ENCODE measurements at regions of chr19 and their contacts with region 1.

Region 1: DNA sequence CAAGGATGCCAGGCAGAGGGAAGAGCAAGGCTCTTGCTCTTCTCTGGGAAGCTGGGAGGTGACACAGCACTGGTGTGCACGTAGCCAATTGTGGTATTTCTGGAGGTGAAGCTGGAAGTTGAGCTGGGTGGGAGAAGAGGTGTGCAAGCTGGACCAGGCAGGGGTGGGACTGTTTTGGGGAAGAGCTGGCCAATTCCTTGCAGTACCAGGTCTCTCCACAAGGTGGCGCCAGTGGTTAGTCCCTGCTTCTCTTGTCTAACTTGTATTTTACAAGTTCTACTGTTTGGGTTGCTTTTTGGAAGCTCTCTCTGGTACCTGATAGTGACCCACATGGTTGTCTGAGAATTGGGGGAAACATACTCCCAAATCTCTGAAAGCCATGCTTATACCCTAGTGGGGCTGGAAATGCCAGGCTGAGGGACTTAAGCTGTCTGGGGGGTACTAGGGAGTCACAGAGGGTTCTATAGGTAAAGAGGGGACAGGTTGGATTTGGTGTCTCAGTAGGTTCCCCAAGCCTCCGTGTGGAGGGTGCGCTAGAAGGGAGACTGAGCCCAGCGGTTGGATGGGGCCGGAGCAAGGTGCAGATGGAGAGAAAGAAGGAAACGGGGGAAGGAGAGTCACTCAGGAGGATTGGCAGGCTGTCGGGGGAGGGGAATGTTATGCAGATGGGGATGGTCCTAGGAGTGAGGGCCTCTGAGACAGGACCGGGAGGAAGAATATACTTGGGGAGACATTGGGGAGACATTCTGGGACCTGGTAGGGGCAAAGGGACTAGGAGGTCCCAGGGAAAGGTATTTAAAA is 3.0 kb downstream of the HPN start:
- DNase-seq: peak; percentile 76 to 95
- ATAC-seq: peak; percentile 4 to 42; a peak in 4 of 6 replicates
- H3K4me3 ChIP-seq: no peak overlapping the region
- H3K27ac ChIP-seq: no peak overlapping the region
- H3K4me1 ChIP-seq: peaks cover 29% of the 10 kb centered on the region
- CTCF ChIP-seq: peak; percentile 99
- EP300 ChIP-seq: no peak
- POLR2A ChIP-seq: no peak
- RAD21 ChIP-seq: peak; percentile 76 to 82

Region 2: DNA sequence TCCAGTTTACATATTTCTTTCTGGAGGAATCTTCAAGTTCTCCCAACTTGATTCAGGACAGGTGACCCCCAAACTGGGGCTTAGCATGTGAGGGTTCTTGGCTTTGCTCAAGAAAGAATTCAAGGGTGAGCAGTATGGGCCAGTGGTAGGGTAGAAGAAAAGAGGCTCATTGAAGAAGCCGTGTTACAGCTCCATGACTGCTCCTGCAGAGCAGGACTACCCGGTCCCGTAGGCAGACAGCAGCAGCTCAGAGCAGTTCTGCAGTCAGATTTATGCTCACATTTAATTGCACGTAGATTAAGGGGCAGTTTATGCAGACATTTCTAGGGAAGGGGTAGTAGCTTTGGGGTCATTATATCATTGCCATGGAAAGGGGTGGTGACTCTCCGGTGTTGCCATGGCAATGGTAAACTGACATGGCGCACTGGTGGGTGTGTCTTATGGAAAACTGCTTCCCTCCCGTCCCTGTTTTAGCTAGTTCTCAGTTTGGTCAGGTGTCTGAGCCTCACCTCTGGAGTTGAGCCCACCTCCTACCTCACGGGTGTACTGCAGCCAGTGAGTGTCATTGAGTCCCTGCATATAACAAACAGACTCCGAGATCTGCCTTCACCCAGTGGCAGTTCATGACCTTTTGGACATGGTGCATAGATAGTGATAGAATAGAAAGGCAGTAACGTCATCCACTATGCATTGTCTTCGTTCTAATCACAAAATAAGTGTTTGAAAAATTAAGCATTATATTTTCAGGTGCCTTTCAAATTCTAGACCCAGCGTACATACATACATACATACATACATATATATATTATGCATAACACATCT is 64.5 kb before region 1 on chr19:
- CTCF ChIA-PET with region 1: interaction called, 253 read pairs
- POLR2A ChIA-PET with region 1: no interaction called
- DNase-seq: no peak
- ATAC-seq: peak; percentile 49 to 57; a peak in 4 of 6 replicates
- H3K4me3 ChIP-seq: no peak overlapping the region
- H3K27ac ChIP-seq: no peak overlapping the region
- H3K4me1 ChIP-seq: peaks cover 1% of the 10 kb centered on the region; the same call in 1 of the 3 replicates
- CTCF ChIP-seq: no peak
- EP300 ChIP-seq: no peak
- POLR2A ChIP-seq: no peak
- RAD21 ChIP-seq: no peak

Region 3: GRCh38 chr19:35006342-35007018 is 38.0 kb before region 1 on chr19:
- CTCF ChIA-PET with region 1: interaction called, 29 read pairs
- POLR2A ChIA-PET with region 1: interaction called, 3 read pairs
- DNase-seq: peak; percentile 98 to 100
- ATAC-seq: peak; percentile 84 to 92
- H3K4me3 ChIP-seq: peak overlapping the region; percentile 25
- H3K27ac ChIP-seq: peak overlapping the region; percentile 93 to 94
- H3K4me1 ChIP-seq: peaks cover 79% of the 10 kb centered on the region
- CTCF ChIP-seq: peak; percentile 24; the same call in 2 of the 3 replicates
- EP300 ChIP-seq: peak; percentile 97
- POLR2A ChIP-seq: no peak
- RAD21 ChIP-seq: peak; percentile 27 to 71

Region 4: DNA sequence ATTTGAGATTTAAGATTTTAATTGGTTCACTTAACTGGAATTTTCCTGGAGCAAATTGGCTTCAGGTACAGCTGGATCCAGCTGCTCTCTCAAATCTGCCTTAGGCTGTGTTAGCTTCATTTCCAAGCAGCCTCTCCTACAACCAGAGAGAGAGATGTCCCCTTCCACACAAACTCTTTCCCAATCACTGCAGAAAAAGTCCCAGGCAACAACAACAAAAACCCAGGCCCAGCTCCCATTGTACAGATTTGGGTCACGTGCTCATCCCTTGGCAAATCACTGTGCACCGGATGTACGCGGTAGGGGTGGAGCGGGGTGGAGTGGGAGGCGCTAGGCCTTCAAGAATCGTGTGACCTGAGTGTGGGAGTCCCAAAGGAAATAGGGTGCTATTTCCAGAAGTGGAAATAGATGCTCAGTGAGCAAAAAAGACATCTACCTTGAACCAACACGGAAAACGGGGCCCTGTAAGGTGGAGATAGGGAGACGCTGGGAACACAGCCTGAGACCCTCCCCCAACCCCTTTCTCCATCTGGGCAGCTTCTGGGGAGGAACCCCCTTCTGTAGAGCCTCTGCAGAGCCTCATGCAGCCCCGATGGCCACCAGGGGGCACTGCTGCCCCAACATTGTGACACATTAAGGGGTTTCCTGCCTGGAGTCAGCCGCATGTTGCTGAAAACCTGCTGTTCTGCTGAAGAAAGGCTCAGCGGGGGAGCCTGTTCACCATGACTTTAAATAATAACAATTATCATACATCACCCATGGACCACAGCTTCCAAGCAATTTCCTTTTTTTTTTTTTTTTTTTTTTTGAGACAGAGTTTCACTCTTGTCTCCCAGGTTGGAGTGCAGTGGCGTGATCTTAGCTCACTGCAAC is 22.4 kb after region 1 on chr19:
- CTCF ChIA-PET with region 1: interaction called, 374 read pairs
- POLR2A ChIA-PET with region 1: no interaction called
- DNase-seq: peak; percentile 90 to 93
- ATAC-seq: peak; percentile 83 to 95
- H3K4me3 ChIP-seq: no peak overlapping the region; the same call in 2 of the 3 replicates
- H3K27ac ChIP-seq: no peak overlapping the region
- H3K4me1 ChIP-seq: peaks cover 9% of the 10 kb centered on the region; the same call in 2 of the 3 replicates
- CTCF ChIP-seq: peak; percentile 93
- EP300 ChIP-seq: no peak
- POLR2A ChIP-seq: no peak
- RAD21 ChIP-seq: peak; percentile 90 to 94

Region 5: DNA sequence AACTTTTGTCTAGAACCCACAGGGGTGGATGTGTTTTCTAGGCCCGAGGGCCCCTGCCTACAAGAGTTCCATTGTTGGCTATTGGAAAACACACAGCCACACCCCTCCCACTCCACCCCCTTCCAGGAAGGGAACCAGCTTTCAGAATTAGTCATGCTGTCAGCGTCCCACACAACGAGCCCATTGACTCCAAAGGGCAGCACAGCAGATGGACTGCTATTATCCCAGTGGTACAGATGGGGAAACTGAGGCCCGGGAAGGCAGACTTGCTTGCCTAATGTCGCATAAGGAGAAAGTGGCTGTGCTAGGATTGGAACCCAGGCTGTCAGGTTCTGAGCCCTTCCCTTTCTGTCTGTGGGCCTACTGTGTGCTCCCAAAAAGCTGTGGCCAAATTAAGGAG is 63.0 kb after region 1 on chr19:
- CTCF ChIA-PET with region 1: interaction called, 29 read pairs
- POLR2A ChIA-PET with region 1: no interaction called
- DNase-seq: peak in 1 of 2 experiments; percentile 55
- ATAC-seq: no peak
- H3K4me3 ChIP-seq: no peak overlapping the region
- H3K27ac ChIP-seq: no peak overlapping the region
- H3K4me1 ChIP-seq: peaks cover 6% of the 10 kb centered on the region; the same call in 1 of the 3 replicates
- CTCF ChIP-seq: no peak
- EP300 ChIP-seq: no peak
- POLR2A ChIP-seq: no peak
- RAD21 ChIP-seq: no peak

Region 6: GRCh38 chr19:35140962-35141637 is 96.6 kb after region 1 on chr19:
- CTCF ChIA-PET with region 1: interaction called, 58 read pairs
- POLR2A ChIA-PET with region 1: no interaction called
- DNase-seq: peak; percentile 95 to 100
- ATAC-seq: peak; percentile 59 to 86
- H3K4me3 ChIP-seq: peak overlapping the region; percentile 34
- H3K27ac ChIP-seq: peak overlapping the region in 1 of 2 experiments; percentile 52; a peak in 2 of 6 replicates
- H3K4me1 ChIP-seq: peaks cover 52% of the 10 kb centered on the region
- CTCF ChIP-seq: peak; percentile 66
- EP300 ChIP-seq: no peak
- POLR2A ChIP-seq: no peak
- RAD21 ChIP-seq: peak; percentile 65 to 82